PC-9 (cell line): ENCODE measurements at regions of chr7 and their contacts with region 1.

Region 1: DNA sequence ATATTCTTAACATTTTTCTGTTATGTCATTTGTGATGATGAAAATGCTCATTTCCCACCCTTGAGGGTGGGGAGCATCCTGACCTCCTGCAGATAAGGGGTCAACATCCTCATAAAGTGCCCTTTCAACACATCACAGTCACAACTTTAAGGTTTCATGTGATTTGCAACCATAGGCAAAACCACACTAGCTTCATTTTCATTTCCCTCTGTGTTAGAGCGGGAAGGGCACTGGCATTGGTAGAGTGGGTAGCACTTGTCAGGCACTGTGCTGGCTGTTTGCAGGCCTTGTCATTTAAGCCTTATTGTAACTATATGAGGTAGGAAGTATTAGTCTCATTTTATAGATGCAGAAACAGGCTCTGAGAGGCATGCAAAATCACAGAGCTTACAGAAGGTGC is 39.8 kb downstream of the PSMC2 start:
- DNase-seq: no peak
- H3K4me3 ChIP-seq: no peak overlapping the region
- H3K27ac ChIP-seq: no peak overlapping the region
- H3K4me1 ChIP-seq: no peaks in the 10 kb centered on the region
- H3K27me3 ChIP-seq: peaks cover 17% of the 10 kb centered on the region; the same call in 1 of the 2 replicates
- CTCF ChIP-seq: no peak

Region 2: DNA sequence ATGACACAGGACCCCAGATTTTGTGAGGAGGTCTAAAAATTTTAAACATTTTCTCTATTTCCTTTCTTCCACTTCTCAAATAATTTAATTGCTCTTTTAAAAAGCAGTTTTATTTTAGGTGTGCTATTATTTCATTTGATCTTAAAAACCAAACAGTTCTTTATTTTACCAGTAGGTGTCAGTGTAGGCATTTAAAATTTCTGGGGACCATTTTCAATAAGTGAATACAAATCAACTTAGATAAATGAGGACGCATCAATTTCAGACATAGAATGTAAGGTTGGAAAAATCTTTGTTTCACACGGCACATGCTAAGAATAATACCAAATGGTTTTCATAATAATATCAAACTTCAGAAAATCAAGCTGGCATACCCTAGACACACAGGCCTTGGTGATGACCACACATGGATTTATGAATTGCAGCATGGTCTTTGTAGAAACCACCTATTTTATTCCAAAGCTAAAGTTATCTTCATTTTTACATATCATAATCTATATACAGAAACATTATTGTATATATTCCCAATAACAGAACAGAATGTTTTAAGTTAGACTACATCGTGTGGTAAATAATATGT is 186.3 kb after region 1 on chr7:
- CTCF ChIA-PET with region 1: no interaction called
- POLR2A ChIA-PET with region 1: no interaction called
- intact Hi-C with region 1: no loop called
- DNase-seq: peak in 1 of 2 experiments; percentile 38
- H3K4me3 ChIP-seq: no peak overlapping the region
- H3K27ac ChIP-seq: no peak overlapping the region
- H3K4me1 ChIP-seq: no peaks in the 10 kb centered on the region
- H3K27me3 ChIP-seq: 0 out of 2 replicates have a peak, but pooled peaks cover 5% of the 10 kb centered on the region
- CTCF ChIP-seq: peak; percentile 83

Region 3: GRCh38 chr7:104017001-104017400 is 629.8 kb after region 1 on chr7:
- CTCF ChIA-PET with region 1: no interaction called
- POLR2A ChIA-PET with region 1: no interaction called
- intact Hi-C with region 1: no loop called
- DNase-seq: no peak
- H3K4me3 ChIP-seq: no peak overlapping the region
- H3K27ac ChIP-seq: no peak overlapping the region
- H3K4me1 ChIP-seq: no peaks in the 10 kb centered on the region
- H3K27me3 ChIP-seq: no peaks in the 10 kb centered on the region
- CTCF ChIP-seq: no peak

Region 4: DNA sequence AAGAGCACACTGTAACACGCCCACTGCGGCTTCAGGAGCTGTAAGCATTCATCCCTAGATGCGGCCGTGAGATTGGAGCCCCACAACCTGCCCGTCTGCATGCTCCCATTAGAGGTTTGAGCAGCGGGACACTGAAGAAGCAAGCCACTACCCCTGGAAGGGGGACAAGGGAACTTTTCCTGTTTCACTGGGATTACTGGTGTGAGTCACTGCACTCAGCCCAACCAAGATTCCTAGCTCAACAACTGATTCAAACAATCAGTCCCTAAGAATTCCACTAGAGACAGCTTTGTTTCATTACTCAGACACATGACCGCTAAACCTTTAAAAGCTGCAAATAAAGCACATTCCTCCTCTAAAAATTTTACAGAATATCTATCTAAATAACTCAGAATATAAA is 750.7 kb after region 1 on chr7:
- CTCF ChIA-PET with region 1: no interaction called
- POLR2A ChIA-PET with region 1: interaction called, 12 read pairs
- intact Hi-C with region 1: no loop called
- DNase-seq: no peak
- H3K4me3 ChIP-seq: no peak overlapping the region
- H3K27ac ChIP-seq: no peak overlapping the region
- H3K4me1 ChIP-seq: no peaks in the 10 kb centered on the region
- H3K27me3 ChIP-seq: no peaks in the 10 kb centered on the region
- CTCF ChIP-seq: no peak